CD8-positive, alpha-beta T cell (primary cell): ENCODE measurements at regions of chr17 and their contacts with region 1.

Region 1: GRCh38 chr17:63425482-63425881 is 20.6 kb downstream of the CYB561 start:
- DNase-seq: peak; percentile 35 to 84 (median 73)
- ATAC-seq: peak; percentile 84
- H3K4me3 ChIP-seq: no peak overlapping the region
- H3K4me3 Mint-ChIP-seq: no peak overlapping the region
- H3K27ac ChIP-seq: no peak overlapping the region
- H3K27ac Mint-ChIP-seq: no peak overlapping the region
- H3K4me1 ChIP-seq: peaks cover 29% of the 10 kb centered on the region
- H3K4me1 Mint-ChIP-seq: peaks cover 43% of the 10 kb centered on the region
- H3K27me3 ChIP-seq: no peaks in the 10 kb centered on the region
- H3K27me3 Mint-ChIP-seq: no peaks in the 10 kb centered on the region
- CTCF ChIP-seq: peak; percentile 99

Region 2: GRCh38 chr17:63445979-63446691 is 20.7 kb after region 1 on chr17 and contains the start of gene CYB561:
- CTCF ChIA-PET with region 1: interaction called, 105 read pairs
- POLR2A ChIA-PET with region 1: interaction called, 5 read pairs
- intact Hi-C with region 1: no loop called
- DNase-seq: peak; percentile 41 to 87 (median 65)
- ATAC-seq: peak; percentile 65
- H3K4me3 ChIP-seq: peak within 1 kb of the TSS; percentile 59 to 61
- H3K4me3 Mint-ChIP-seq: peak within 1 kb of the TSS; percentile 77
- H3K27ac ChIP-seq: peak within 1 kb of the TSS; percentile 49 to 90
- H3K27ac Mint-ChIP-seq: peak within 1 kb of the TSS; percentile 83
- H3K4me1 ChIP-seq: peaks cover 12% of the 10 kb centered on the region
- H3K4me1 Mint-ChIP-seq: peaks cover 33% of the 10 kb centered on the region
- H3K27me3 ChIP-seq: no peaks in the 10 kb centered on the region
- H3K27me3 Mint-ChIP-seq: no peaks in the 10 kb centered on the region
- CTCF ChIP-seq: peak; percentile 27
- total RNA-seq, gene CYB561: 13.7 to 14.9 TPM

Region 3: GRCh38 chr17:63486317-63487013 is 61.0 kb after region 1 on chr17:
- CTCF ChIA-PET with region 1: interaction called, 282 read pairs
- POLR2A ChIA-PET with region 1: no interaction called
- intact Hi-C with region 1: no loop called
- DNase-seq: no peak
- ATAC-seq: no peak
- H3K4me3 ChIP-seq: no peak overlapping the region
- H3K4me3 Mint-ChIP-seq: no peak overlapping the region
- H3K27ac ChIP-seq: no peak overlapping the region
- H3K27ac Mint-ChIP-seq: no peak overlapping the region
- H3K4me1 ChIP-seq: no peaks in the 10 kb centered on the region
- H3K4me1 Mint-ChIP-seq: no peaks in the 10 kb centered on the region
- H3K27me3 ChIP-seq: no peaks in the 10 kb centered on the region
- H3K27me3 Mint-ChIP-seq: no peaks in the 10 kb centered on the region
- CTCF ChIP-seq: no peak

Region 4: GRCh38 chr17:63621766-63622519 is 196.5 kb after region 1 on chr17 and contains the start of gene MAP3K3:
- CTCF ChIA-PET with region 1: interaction called, 151 read pairs
- POLR2A ChIA-PET with region 1: interaction called, 5 read pairs
- intact Hi-C with region 1: no loop called
- DNase-seq: peak; percentile 93 to 99 (median 96)
- ATAC-seq: peak; percentile 90
- H3K4me3 ChIP-seq: peak within 1 kb of the TSS; percentile 78 to 79
- H3K4me3 Mint-ChIP-seq: peak within 1 kb of the TSS; percentile 98
- H3K27ac ChIP-seq: peak within 1 kb of the TSS; percentile 58 to 81
- H3K27ac Mint-ChIP-seq: peak within 1 kb of the TSS; percentile 93
- H3K4me1 ChIP-seq: peaks cover 30% of the 10 kb centered on the region
- H3K4me1 Mint-ChIP-seq: peaks cover 39% of the 10 kb centered on the region
- H3K27me3 ChIP-seq: no peaks in the 10 kb centered on the region
- H3K27me3 Mint-ChIP-seq: no peaks in the 10 kb centered on the region
- CTCF ChIP-seq: no peak
- total RNA-seq, gene MAP3K3: 72.9 to 74.5 TPM

Region 5: GRCh38 chr17:63834431-63835166 is 409.1 kb after region 1 on chr17:
- CTCF ChIA-PET with region 1: interaction called, 4 read pairs
- POLR2A ChIA-PET with region 1: no interaction called
- intact Hi-C with region 1: loop called in 1 of 2 experiments (anchors 5 kb)
- DNase-seq: peak in 7 of 9 experiments; percentile 29 to 82 (median 68)
- ATAC-seq: peak; percentile 82
- H3K4me3 ChIP-seq: no peak overlapping the region
- H3K4me3 Mint-ChIP-seq: no peak overlapping the region
- H3K27ac ChIP-seq: peak overlapping the region in 1 of 2 experiments; percentile 8
- H3K27ac Mint-ChIP-seq: peak overlapping the region; percentile 66
- H3K4me1 ChIP-seq: peaks cover 65% of the 10 kb centered on the region
- H3K4me1 Mint-ChIP-seq: peaks cover 50% of the 10 kb centered on the region
- H3K27me3 ChIP-seq: no peaks in the 10 kb centered on the region
- H3K27me3 Mint-ChIP-seq: no peaks in the 10 kb centered on the region
- CTCF ChIP-seq: peak; percentile 40

Region 6: GRCh38 chr17:64091116-64091515 is 665.6 kb after region 1 on chr17:
- CTCF ChIA-PET with region 1: no interaction called
- POLR2A ChIA-PET with region 1: no interaction called
- intact Hi-C with region 1: no loop called
- DNase-seq: peak in 2 of 9 experiments; percentile 25 to 31
- ATAC-seq: peak; percentile 57
- H3K4me3 ChIP-seq: no peak overlapping the region
- H3K4me3 Mint-ChIP-seq: peak overlapping the region; percentile 23
- H3K27ac ChIP-seq: peak overlapping the region in 1 of 2 experiments; percentile 32
- H3K27ac Mint-ChIP-seq: peak overlapping the region; percentile 87
- H3K4me1 ChIP-seq: peaks cover 6% of the 10 kb centered on the region
- H3K4me1 Mint-ChIP-seq: peaks cover 65% of the 10 kb centered on the region
- H3K27me3 ChIP-seq: no peaks in the 10 kb centered on the region
- H3K27me3 Mint-ChIP-seq: no peaks in the 10 kb centered on the region
- CTCF ChIP-seq: no peak

Region 7: DNA sequence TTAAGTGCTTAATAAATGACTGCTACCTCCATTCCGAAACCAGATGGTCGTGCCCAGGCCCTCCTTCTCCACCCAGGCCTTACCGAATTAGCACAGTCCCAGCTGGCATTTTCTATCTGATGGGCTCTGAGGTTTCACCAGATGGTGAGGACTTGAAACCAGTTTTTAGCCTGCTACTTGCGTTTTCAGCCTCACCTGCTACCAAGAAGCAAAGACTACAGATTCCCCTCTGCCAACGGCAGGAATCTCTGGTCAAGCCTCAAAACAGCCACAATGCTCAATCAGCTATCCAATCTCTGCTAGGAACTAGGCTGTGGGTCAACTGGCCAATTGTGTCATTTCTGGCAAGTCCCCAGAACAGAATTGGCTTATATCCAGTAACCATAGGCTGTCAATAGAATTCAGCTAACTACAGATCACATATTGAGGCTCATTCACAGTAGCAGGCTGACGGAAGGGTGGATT is 953.4 kb after region 1 on chr17:
- CTCF ChIA-PET with region 1: no interaction called
- POLR2A ChIA-PET with region 1: no interaction called
- intact Hi-C with region 1: no loop called
- DNase-seq: no peak
- ATAC-seq: no peak
- H3K4me3 ChIP-seq: no peak overlapping the region
- H3K4me3 Mint-ChIP-seq: no peak overlapping the region
- H3K27ac ChIP-seq: no peak overlapping the region
- H3K27ac Mint-ChIP-seq: peak overlapping the region; percentile 34
- H3K4me1 ChIP-seq: peaks cover 25% of the 10 kb centered on the region
- H3K4me1 Mint-ChIP-seq: peaks cover 52% of the 10 kb centered on the region
- H3K27me3 ChIP-seq: no peaks in the 10 kb centered on the region
- H3K27me3 Mint-ChIP-seq: no peaks in the 10 kb centered on the region
- CTCF ChIP-seq: no peak